ENCODE measurements at regions of chr12 and their contacts with region 1.

Region 1: DNA sequence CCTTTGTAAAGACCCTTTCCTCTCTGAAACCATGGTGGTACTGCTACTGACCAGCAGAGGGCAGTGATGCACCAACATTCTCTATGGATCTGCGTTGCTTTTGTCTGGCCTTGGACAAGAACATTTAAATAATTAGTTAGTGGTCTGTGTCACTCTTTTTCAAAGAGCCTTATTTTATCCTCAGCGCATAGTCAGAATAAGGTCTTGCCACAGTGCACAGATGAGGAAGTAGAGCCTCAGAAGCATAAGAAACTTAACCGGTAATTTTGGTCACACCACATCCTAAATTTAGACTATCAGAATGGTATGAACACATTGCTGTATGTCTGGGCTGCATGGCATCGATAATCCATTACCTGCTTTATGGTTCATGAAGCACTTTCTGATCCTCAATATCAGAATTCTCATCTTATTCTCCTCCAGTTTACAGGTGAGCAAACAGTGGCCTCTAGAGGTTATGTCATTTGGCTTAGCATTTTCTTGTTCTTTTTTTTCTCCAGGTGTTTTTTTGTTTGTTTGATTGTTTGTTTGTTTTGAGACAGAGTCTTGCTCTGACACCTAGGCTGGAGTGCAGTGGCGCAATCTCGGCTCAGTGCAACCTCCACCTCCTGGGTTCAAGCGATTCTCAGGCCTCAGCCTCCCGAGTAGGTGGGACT is 23.7 kb upstream of the IFT81 start:
- ATAC-seq: peak; percentile 79 to 92 (median 88)
- H3K4me3 ChIP-seq: no peak overlapping the region
- H3K27ac ChIP-seq: no peak overlapping the region
- H3K4me1 ChIP-seq: peaks cover 3% of the 10 kb centered on the region in 2 donors

Region 2: GRCh38 chr12:110176745-110177144 is 76.3 kb after region 1 on chr12:
- in situ Hi-C with region 1: no loop called
- ATAC-seq: no peak
- H3K4me3 ChIP-seq: no peak overlapping the region
- H3K27ac ChIP-seq: no peak overlapping the region
- H3K4me1 ChIP-seq: no peaks in the 10 kb centered on the region

Region 3: DNA sequence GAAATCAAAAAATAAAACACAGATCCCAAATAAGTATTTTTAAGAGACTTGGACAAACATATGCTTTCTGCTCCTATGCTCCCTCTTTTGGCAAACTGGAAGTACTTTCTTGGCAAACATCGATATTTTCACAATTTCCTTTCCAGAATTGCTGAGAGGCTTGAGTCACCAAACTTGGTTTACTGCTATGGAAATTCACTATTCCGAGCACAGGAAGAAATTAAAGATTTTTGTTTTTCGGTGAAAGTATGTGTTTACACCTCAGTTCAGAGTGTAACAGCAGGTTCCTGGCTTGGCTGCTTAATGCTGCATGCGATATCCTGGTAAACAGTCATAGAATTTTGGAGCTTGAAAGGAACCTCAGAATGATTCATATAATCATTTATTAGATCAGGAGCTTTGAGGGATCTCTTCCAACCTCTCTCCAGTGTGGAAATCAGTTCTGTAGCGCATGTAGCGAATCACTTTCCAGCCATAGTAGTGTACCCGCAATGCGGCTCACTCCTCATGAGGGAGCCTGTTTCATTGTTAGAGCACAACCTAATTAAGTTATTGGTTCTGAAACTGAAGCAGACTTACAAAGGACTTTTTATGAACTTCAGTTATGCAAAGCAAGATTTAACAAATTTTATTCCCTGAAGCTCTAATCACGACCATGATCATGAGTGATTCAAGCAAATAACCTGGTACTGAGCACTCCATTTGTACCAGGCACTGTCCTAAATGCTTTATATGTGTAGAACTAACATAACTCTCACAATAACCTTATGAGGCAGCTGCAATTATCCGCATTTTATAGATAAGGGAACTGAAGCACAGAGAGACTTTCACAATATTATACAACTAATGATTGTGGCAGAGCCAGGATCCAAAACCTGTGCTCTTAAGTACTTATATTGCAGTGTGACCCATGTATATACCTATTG is 124.2 kb after region 1 on chr12:
- in situ Hi-C with region 1: loop called in 1 of 9 experiments (anchors 10 kb)
- ATAC-seq: peak in 3 of 8 experiments; percentile 68 to 91 (median 91)
- H3K4me3 ChIP-seq: no peak overlapping the region
- H3K27ac ChIP-seq: no peak overlapping the region
- H3K4me1 ChIP-seq: no peaks in the 10 kb centered on the region

Region 4: GRCh38 chr12:110613071-110613770 is 512.8 kb after region 1 on chr12:
- in situ Hi-C with region 1: no loop called
- ATAC-seq: no peak
- H3K4me3 ChIP-seq: peak overlapping the region; percentile 54 to 60 (median 55)
- H3K27ac ChIP-seq: peak overlapping the region; percentile 66 to 73
- H3K4me1 ChIP-seq: peaks cover 6 to 8% of the 10 kb centered on the region in 2 donors